Panc1 (cell line): ENCODE measurements at regions of chr10 and their contacts with region 1.

Region 1: GRCh38 chr10:110487411-110488123 is 10.1 kb upstream of the DUSP5 start:
- DNase-seq: peak; percentile 24
- ATAC-seq: no peak; the same call in 1 of the 2 replicates
- H3K4me3 ChIP-seq: no peak overlapping the region
- H3K27ac ChIP-seq: no peak overlapping the region; the same call in 1 of the 2 replicates
- H3K4me1 ChIP-seq: peaks cover 11% of the 10 kb centered on the region
- H3K27me3 ChIP-seq: no peaks in the 10 kb centered on the region
- CTCF ChIP-seq: no peak

Region 2: DNA sequence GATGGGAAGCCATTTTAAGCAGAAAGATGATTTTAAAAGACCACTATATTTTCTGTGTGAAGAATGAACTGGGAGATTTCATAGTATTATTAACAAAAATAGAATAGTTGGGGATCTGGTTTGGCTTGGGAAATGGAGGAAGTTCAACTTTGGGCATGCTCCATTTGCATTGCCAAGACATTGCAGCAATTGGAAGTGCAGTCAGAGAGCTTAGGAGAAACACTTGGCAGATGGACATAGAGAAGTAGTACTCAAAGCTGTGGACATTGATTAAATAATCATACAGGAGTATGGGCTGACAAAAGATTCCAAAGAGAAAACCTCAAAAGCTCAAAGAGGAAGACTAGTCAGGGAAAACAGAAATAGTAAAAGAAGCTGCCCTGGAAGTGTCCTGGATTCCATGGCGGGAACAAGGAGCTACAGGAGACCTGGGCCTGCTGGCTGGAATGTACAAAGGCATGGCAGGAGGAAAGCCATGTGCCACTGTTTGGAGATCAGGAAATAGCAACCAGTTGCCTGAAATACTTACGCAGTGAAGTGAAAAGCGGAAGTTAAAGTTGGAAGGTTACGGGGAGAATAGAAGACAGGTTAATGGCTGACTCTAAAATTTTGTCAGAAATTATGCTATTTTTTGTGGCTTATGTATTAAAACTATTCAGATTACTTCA is 373.8 kb before region 1 on chr10:
- CTCF ChIA-PET with region 1: no interaction called
- POLR2A ChIA-PET with region 1: no interaction called
- in situ Hi-C with region 1: no loop called
- intact Hi-C with region 1: no loop called
- DNase-seq: no peak
- ATAC-seq: no peak
- H3K4me3 ChIP-seq: no peak overlapping the region
- H3K27ac ChIP-seq: no peak overlapping the region
- H3K4me1 ChIP-seq: no peaks in the 10 kb centered on the region
- H3K27me3 ChIP-seq: no peaks in the 10 kb centered on the region
- CTCF ChIP-seq: no peak

Region 3: DNA sequence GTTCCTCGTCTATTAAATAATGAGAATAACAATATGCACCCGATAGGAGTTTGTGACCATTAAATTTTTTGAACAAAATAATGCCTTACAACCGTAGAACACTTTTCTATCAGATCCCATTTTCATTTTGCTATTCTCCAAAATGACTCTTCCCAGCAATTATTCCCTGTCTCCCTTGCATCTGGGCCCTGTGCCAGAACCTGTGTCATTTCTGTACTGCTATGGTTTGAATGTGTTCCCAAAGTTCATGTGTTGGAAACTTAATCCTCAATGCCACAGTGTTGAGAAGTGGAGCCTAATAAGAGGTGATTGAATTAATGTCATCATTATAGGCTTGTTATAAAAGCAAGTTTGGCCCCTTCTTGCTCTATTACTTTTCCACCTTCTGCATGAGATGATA is 149.7 kb before region 1 on chr10:
- CTCF ChIA-PET with region 1: interaction called, 11 read pairs
- POLR2A ChIA-PET with region 1: no interaction called
- in situ Hi-C with region 1: no loop called
- intact Hi-C with region 1: no loop called
- DNase-seq: no peak
- ATAC-seq: no peak
- H3K4me3 ChIP-seq: no peak overlapping the region
- H3K27ac ChIP-seq: no peak overlapping the region
- H3K4me1 ChIP-seq: no peaks in the 10 kb centered on the region
- H3K27me3 ChIP-seq: no peaks in the 10 kb centered on the region
- CTCF ChIP-seq: no peak

Region 4: GRCh38 chr10:111146025-111146640 is 658.6 kb after region 1 on chr10:
- CTCF ChIA-PET with region 1: no interaction called
- POLR2A ChIA-PET with region 1: no interaction called
- in situ Hi-C with region 1: no loop called
- intact Hi-C with region 1: no loop called
- DNase-seq: no peak
- ATAC-seq: no peak
- H3K4me3 ChIP-seq: no peak overlapping the region
- H3K27ac ChIP-seq: no peak overlapping the region
- H3K4me1 ChIP-seq: no peaks in the 10 kb centered on the region
- H3K27me3 ChIP-seq: 0 out of 2 replicates have a peak, but pooled peaks cover 1% of the 10 kb centered on the region
- CTCF ChIP-seq: no peak